ENCODE measurements at regions of chr4 and their contacts with region 1.

Region 1: DNA sequence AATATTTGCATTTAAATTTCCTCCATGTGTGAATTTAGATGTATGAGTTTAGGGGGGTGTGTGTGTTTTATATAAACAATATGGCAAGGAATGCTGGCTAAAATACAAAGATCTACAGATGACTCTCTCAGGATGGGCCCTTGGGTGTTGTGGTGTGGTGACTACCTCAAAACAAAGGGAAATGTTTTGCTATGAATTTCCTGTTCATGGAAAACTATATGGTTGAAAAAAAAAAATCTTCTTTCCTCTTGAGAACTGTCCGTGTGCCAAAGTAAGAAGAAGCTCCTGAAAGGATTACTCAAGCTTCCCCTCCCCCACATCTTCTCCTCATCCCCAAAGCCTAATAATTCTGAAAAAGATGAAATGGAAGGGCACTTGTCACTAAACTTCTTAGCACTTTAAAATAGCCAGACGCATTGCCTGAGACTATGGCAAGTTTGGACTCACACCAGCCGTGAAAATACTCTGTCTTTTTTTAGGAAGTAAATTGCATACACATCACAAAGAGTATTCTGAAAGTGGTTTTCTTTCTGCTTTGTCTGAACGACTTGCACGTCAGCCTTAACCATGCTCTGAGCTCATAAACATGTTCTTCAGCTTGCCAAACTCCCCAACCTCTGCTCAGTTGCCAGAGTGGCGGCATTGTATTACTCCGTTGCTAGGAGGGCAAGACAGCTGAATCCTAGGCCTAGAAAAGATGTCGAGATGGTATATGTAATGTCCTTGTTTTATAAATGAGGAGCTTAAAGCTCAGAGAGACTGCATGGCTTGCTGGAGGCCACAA is 250.4 kb upstream of the JADE1 start:
- DNase-seq: no peak
- H3K4me3 ChIP-seq: no peak overlapping the region
- H3K27ac ChIP-seq: no peak overlapping the region
- H3K4me1 ChIP-seq: peaks cover 4% of the 10 kb centered on the region
- H3K27me3 ChIP-seq: no peaks in the 10 kb centered on the region
- CTCF ChIP-seq: no peak
- EP300 ChIP-seq: no peak
- POLR2A ChIP-seq: no peak

Region 2: DNA sequence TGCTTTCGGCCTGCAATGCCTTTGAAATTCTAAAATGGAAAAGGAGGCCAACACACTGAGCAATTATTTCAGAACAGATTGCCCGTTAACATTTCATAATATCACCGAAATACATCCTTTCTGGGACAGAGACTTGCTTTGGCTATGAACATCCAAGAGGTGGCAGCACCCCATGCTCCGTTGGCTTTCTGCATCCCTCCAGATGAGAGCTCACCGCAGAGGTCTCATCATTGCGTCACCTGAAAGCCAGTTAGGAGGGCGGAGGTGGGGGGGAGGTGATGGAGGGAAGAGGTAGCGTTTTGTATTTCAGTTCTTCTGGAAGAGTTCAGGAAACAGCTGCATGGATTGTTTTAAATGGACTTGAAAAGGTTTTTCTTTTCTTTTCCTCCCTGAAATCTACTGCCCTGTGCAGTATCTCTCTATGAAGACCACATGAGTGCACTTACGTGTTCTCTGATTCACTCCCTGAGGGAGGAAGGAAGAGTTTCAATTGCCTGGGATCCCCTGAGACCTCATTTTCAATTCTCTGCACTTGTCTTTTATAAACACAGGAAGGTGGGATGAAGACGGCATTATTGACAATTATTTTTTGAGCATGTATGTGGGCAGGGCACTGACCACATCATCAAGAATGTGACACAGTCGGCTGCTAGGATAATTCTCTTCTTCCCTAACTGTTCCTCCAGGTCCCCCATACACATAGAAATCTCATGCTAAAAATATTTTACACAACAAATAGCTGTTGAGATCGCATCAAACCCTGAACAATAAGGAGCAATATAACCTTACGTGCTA is 104.6 kb before region 1 on chr4:
- intact Hi-C with region 1: loop called in 1 of 4 experiments (anchors 10 kb)
- DNase-seq: peak; percentile 83 to 93 (median 84)
- H3K4me3 ChIP-seq: no peak overlapping the region
- H3K27ac ChIP-seq: no peak overlapping the region
- H3K4me1 ChIP-seq: no peaks in the 10 kb centered on the region
- H3K27me3 ChIP-seq: no peaks in the 10 kb centered on the region
- CTCF ChIP-seq: peak; percentile 56 to 83 (median 80)
- EP300 ChIP-seq: no peak
- POLR2A ChIP-seq: no peak

Region 3: DNA sequence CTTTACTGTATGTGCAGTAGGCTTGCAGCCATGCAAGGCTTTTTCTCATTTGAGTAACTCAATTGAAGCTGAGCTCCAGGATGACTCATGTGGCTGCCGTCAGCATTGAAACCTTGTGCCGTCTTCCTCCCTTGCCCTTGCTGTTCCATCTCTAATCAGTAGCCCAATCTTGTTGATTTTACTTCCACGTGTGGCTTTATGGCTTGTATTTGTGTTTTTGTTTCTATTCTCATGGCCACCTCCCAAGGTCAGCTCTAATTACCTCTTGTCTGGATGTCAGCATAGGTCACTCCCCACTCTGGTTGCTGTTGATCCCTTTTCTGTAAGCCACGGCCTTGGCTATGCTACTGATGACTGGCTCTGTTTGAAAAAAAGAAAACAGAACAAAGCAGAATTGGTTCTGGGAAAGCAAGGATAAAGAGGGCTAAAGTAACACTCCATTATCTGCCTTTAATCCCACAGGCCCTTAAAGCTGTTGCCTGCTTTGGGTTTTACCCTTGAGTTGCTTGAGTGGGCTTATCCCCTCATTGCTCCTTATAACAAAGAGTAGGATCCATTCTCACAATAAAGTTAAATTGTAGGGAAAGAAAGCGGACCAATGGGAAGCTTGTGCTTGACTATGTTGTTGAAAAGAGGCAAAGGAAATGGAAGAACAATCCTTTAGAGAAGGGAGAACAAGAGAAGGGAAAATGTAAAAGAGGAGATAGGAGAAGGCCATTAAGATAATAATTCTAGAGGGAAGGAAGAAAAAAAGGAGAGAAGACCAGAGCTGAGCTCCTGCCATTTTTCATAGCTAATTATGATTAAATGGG is 97.6 kb before region 1 on chr4:
- intact Hi-C with region 1: loop called in 2 of 4 experiments (anchors 10 kb)
- DNase-seq: peak; percentile 22 to 50 (median 28)
- H3K4me3 ChIP-seq: no peak overlapping the region
- H3K27ac ChIP-seq: no peak overlapping the region
- H3K4me1 ChIP-seq: peaks cover 5% of the 10 kb centered on the region
- H3K27me3 ChIP-seq: no peaks in the 10 kb centered on the region
- CTCF ChIP-seq: no peak
- EP300 ChIP-seq: no peak
- POLR2A ChIP-seq: no peak

Measured in ovary (tissue), 10 donors.